Activated CD4-positive, alpha-beta T cell treated with anti-CD3 and anti-CD28 coated beads, Interleukin-2, amount 10 ng/mL, durations not matched to agents 24 days and 14 days (primary cell): ENCODE measurements at regions of chr12 and their contacts with region 1.

Region 1: GRCh38 chr12:132414634-132415326 is 75.2 kb upstream of the FBRSL1 start:
- DNase-seq: peak; percentile 94
- H3K4me3 Mint-ChIP-seq: no peak overlapping the region
- H3K27ac Mint-ChIP-seq: no peak overlapping the region
- H3K4me1 Mint-ChIP-seq: no peaks in the 10 kb centered on the region
- H3K27me3 Mint-ChIP-seq: peaks cover 2% of the 10 kb centered on the region

Region 2: DNA sequence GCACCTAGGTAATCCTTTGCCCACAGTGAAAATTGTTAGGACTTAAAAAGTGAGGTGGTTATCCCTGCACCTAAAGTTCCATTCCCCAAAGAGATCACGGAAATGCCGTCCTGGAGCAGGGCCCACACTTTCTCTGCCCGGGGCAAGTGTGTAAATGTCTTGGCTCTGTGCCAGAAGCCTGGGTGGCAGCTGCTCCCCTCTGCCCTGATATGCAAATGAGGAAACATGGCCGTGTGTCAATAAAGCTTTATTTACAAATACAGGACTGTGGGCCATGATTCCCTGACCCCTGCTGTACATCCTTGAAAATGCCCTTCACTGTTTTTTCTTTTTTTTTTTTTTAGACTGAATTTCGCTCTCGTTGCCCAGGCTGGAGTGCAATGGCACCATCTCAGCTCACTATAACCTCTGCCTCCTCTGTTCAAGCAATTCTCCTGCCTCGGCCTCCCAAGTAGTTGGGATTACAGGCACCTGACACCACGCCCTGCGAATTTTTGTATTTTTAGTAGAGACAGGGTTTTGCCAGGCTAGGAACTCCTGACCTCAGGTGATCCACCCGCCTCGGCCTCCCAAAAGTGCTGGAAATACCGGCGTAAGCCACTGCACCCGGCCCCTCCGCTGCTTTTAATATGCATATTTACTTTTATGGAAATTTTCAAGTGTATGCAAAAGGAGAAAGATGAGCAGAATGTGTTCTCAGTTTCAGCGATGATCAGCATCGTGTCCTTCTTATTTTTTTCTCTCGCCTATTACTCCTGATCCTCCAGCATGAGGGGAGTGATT is 160.9 kb before region 1 on chr12:
- intact Hi-C with region 1: no loop called
- DNase-seq: no peak
- H3K4me3 Mint-ChIP-seq: no peak overlapping the region
- H3K27ac Mint-ChIP-seq: no peak overlapping the region
- H3K4me1 Mint-ChIP-seq: no peaks in the 10 kb centered on the region
- H3K27me3 Mint-ChIP-seq: no peaks in the 10 kb centered on the region

Region 3: GRCh38 chr12:132523576-132524331 is 109.0 kb after region 1 on chr12:
- intact Hi-C with region 1: loop called (anchors 1 kb)
- DNase-seq: peak; percentile 91
- H3K4me3 Mint-ChIP-seq: no peak overlapping the region
- H3K27ac Mint-ChIP-seq: no peak overlapping the region
- H3K4me1 Mint-ChIP-seq: no peaks in the 10 kb centered on the region
- H3K27me3 Mint-ChIP-seq: no peaks in the 10 kb centered on the region

Region 4: GRCh38 chr12:132560614-132561426 is 146.0 kb after region 1 on chr12:
- intact Hi-C with region 1: loop called (anchors 1 kb)
- DNase-seq: peak; percentile 92
- H3K4me3 Mint-ChIP-seq: peak overlapping the region; percentile 81
- H3K27ac Mint-ChIP-seq: peak overlapping the region; percentile 51
- H3K4me1 Mint-ChIP-seq: peaks cover 6% of the 10 kb centered on the region
- H3K27me3 Mint-ChIP-seq: peaks cover 9% of the 10 kb centered on the region

Region 5: DNA sequence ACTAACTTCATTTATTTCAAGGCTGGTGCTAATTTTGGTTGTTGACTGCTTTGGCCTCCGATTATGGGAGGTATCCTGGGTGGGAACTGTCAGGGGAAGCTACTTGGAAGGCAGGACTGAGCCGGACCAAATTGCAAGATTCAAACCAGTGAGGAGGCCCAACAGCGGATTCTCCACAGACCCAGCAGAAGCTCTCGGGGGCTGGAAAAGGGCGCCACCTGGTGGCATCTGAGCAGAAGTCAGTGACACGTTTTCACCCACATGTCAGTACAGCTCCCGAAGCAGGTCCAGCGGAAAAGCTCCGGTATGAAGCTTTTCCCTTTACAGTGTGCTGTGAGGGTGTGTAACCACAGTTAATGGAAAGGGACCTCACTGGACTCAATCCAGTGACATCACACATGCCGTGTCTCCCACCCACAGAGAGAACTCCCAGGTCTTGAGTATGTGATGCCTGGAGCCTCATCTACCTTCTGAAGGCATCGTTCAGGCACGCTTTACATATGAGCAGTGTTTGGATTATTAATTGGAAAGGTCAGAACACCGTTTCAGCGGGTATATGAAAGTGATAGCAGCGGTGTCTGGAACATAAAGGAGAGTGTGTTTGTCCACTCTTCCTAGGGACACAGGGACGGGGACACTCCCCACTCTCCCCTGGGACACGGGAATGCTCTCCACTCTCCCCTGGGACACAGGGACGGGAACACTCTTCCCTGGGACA is 200.2 kb after region 1 on chr12:
- intact Hi-C with region 1: loop called (anchors 1 kb)
- DNase-seq: peak; percentile 93
- H3K4me3 Mint-ChIP-seq: no peak overlapping the region
- H3K27ac Mint-ChIP-seq: peak overlapping the region; percentile 54
- H3K4me1 Mint-ChIP-seq: peaks cover 4% of the 10 kb centered on the region
- H3K27me3 Mint-ChIP-seq: peaks cover 33% of the 10 kb centered on the region

Region 6: GRCh38 chr12:132624910-132625630 is 210.3 kb after region 1 on chr12:
- intact Hi-C with region 1: no loop called
- DNase-seq: no peak
- H3K4me3 Mint-ChIP-seq: no peak overlapping the region
- H3K27ac Mint-ChIP-seq: no peak overlapping the region
- H3K4me1 Mint-ChIP-seq: peaks cover 3% of the 10 kb centered on the region
- H3K27me3 Mint-ChIP-seq: no peaks in the 10 kb centered on the region